ENCODE measurements at regions of chr3 and their contacts with region 1.

Region 1: GRCh38 chr3:42961633-42962032 is 17.5 kb upstream of the GASK1A start:
- DNase-seq: peak; percentile 7
- H3K4me3 ChIP-seq: no peak overlapping the region
- H3K27ac ChIP-seq: no peak overlapping the region
- H3K27me3 ChIP-seq: no peaks in the 10 kb centered on the region
- CTCF ChIP-seq: peak; percentile 61

Region 2: GRCh38 chr3:42590989-42591756 is 370.5 kb before region 1 on chr3:
- CTCF ChIA-PET with region 1: no interaction called
- POLR2A ChIA-PET with region 1: no interaction called
- DNase-seq: no peak
- H3K4me3 ChIP-seq: peak overlapping the region; percentile 76
- H3K27ac ChIP-seq: peak overlapping the region; percentile 21
- H3K27me3 ChIP-seq: no peaks in the 10 kb centered on the region
- CTCF ChIP-seq: no peak

Region 3: GRCh38 chr3:42790714-42791229 is 170.9 kb before region 1 on chr3:
- CTCF ChIA-PET with region 1: no interaction called
- POLR2A ChIA-PET with region 1: no interaction called
- DNase-seq: no peak
- H3K4me3 ChIP-seq: no peak overlapping the region
- H3K27ac ChIP-seq: no peak overlapping the region
- H3K27me3 ChIP-seq: no peaks in the 10 kb centered on the region
- CTCF ChIP-seq: no peak

Region 4: GRCh38 chr3:42930911-42931310 is 30.7 kb before region 1 on chr3:
- CTCF ChIA-PET with region 1: no interaction called
- POLR2A ChIA-PET with region 1: no interaction called
- DNase-seq: no peak
- H3K4me3 ChIP-seq: no peak overlapping the region
- H3K27ac ChIP-seq: no peak overlapping the region
- H3K27me3 ChIP-seq: no peaks in the 10 kb centered on the region
- CTCF ChIP-seq: no peak

Region 5: GRCh38 chr3:43086460-43087165 is 125.0 kb after region 1 on chr3:
- CTCF ChIA-PET with region 1: interaction called, 12 read pairs
- POLR2A ChIA-PET with region 1: no interaction called
- DNase-seq: no peak
- H3K4me3 ChIP-seq: no peak overlapping the region
- H3K27ac ChIP-seq: no peak overlapping the region
- H3K27me3 ChIP-seq: no peaks in the 10 kb centered on the region
- CTCF ChIP-seq: no peak

Region 6: GRCh38 chr3:43144761-43145490 is 183.3 kb after region 1 on chr3:
- CTCF ChIA-PET with region 1: interaction called, 20 read pairs
- POLR2A ChIA-PET with region 1: no interaction called
- DNase-seq: no peak
- H3K4me3 ChIP-seq: no peak overlapping the region
- H3K27ac ChIP-seq: no peak overlapping the region
- H3K27me3 ChIP-seq: peaks cover 10% of the 10 kb centered on the region
- CTCF ChIP-seq: no peak

Region 7: GRCh38 chr3:43162230-43163084 is 200.8 kb after region 1 on chr3:
- CTCF ChIA-PET with region 1: interaction called, 208 read pairs
- POLR2A ChIA-PET with region 1: no interaction called
- DNase-seq: peak; percentile 37
- H3K4me3 ChIP-seq: no peak overlapping the region
- H3K27ac ChIP-seq: no peak overlapping the region
- H3K27me3 ChIP-seq: peaks cover 4% of the 10 kb centered on the region
- CTCF ChIP-seq: peak; percentile 51

Measured in AG04450 (cell line).